ENCODE measurements at regions of chr5 and their contacts with region 1.

Region 1: GRCh38 chr5:95251185-95251584 is 33.7 kb downstream of the MCTP1 start:
- DNase-seq: no peak
- H3K4me3 ChIP-seq: no peak overlapping the region
- H3K27ac ChIP-seq: no peak overlapping the region
- H3K4me1 ChIP-seq: no peaks in the 10 kb centered on the region
- H3K27me3 ChIP-seq: no peaks in the 10 kb centered on the region
- CTCF ChIP-seq: no peak
- EP300 ChIP-seq: no peak
- POLR2A ChIP-seq: no peak
- RAD21 ChIP-seq: no peak

Region 2: DNA sequence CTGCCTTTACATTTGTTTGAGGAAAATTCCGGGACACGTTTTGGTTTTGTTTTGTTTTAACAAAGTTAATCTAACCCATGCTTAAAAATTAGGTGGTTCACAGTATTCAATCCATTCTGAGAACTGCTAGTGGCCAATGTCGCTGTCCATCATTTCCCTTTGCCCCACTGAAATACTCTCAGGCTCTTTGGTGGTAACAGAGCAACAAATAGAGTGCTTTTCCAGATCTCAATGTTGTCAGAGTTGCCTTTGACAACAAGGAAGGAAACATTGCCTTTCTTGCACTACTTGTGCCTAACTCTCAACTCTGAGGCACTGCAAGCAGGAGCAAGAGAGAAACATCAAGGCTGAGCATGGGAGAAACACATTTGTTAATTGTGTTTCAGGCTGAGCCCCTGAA is 120.2 kb before region 1 on chr5:
- CTCF ChIA-PET with region 1: no interaction called
- POLR2A ChIA-PET with region 1: no interaction called
- DNase-seq: no peak
- H3K4me3 ChIP-seq: no peak overlapping the region
- H3K27ac ChIP-seq: no peak overlapping the region
- H3K4me1 ChIP-seq: no peaks in the 10 kb centered on the region; a peak in 1 of 7 replicates
- H3K27me3 ChIP-seq: peaks cover 0 to 1% (median 0%) of the 10 kb centered on the region in 4 experiments; a peak in 1 of 7 replicates
- CTCF ChIP-seq: no peak
- EP300 ChIP-seq: no peak
- POLR2A ChIP-seq: no peak
- RAD21 ChIP-seq: no peak

Region 3: GRCh38 chr5:95261437-95262175 is 10.4 kb after region 1 on chr5:
- CTCF ChIA-PET with region 1: interaction called, 11 read pairs
- POLR2A ChIA-PET with region 1: no interaction called
- DNase-seq: no peak
- H3K4me3 ChIP-seq: no peak overlapping the region
- H3K27ac ChIP-seq: no peak overlapping the region
- H3K4me1 ChIP-seq: no peaks in the 10 kb centered on the region
- H3K27me3 ChIP-seq: no peaks in the 10 kb centered on the region
- CTCF ChIP-seq: peak in 2 of 3 experiments; percentile 4 to 12; a peak in 2 of 4 replicates
- EP300 ChIP-seq: no peak
- POLR2A ChIP-seq: no peak
- RAD21 ChIP-seq: peak; percentile 55 to 65

Region 4: DNA sequence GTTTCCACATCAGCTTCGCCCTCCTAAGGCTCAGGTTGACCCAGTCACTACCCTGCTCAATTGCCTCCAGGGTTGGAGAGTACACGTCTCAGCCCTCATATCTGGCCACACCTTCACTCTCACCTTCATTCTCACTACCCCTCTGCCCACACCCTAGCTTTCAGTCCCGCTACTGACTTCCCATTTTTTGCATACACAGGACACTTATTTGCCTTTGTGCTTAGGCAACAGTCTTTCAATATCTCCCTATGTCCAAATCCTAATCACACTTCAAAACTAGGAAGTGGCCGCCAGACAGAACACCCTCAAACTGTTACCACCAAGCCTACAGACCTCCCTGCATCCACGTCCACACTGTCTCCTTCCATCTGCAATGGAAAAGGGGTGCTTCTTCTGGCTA is 22.8 kb after region 1 on chr5:
- CTCF ChIA-PET with region 1: no interaction called
- POLR2A ChIA-PET with region 1: no interaction called
- DNase-seq: no peak
- H3K4me3 ChIP-seq: no peak overlapping the region
- H3K27ac ChIP-seq: no peak overlapping the region
- H3K4me1 ChIP-seq: no peaks in the 10 kb centered on the region
- H3K27me3 ChIP-seq: no peaks in the 10 kb centered on the region
- CTCF ChIP-seq: no peak
- EP300 ChIP-seq: no peak
- POLR2A ChIP-seq: no peak
- RAD21 ChIP-seq: no peak

Measured in H1 (cell line).